Calu3 (cell line): ENCODE measurements at regions of chr6 and their contacts with region 1.

Region 1: DNA sequence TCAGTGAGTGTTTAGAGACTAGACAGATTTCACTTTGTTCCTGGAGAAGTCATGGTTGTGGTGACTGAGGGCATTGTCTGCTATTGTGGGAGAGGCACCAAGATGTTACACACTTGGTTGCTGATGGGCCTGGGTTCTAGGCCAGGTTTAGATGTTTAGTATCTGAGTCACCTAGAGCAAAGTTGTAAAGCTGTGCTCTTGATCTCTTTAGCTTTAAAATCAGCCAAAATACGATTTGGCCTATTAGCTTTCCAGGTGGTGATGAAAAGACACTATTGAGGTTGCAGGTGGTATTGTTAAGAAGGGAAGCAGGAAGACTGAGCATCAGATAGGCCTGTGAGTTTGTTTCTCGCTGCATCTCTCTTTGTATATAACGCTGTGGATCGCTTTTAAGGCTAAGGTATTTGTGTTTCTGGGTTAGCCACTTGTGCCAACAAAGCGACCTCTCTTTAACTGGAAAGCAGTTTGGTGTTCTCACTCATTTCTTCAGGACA is 48.6 kb downstream of the FOXO3 start:
- DNase-seq: no peak
- H3K4me3 Mint-ChIP-seq: no peak overlapping the region
- H3K27ac Mint-ChIP-seq: no peak overlapping the region
- H3K4me1 Mint-ChIP-seq: peaks cover 41% of the 10 kb centered on the region
- H3K27me3 Mint-ChIP-seq: no peaks in the 10 kb centered on the region
- CTCF ChIP-seq: no peak

Region 2: GRCh38 chr6:108565893-108566292 is 43.4 kb before region 1 on chr6:
- CTCF ChIA-PET with region 1: no interaction called
- intact Hi-C with region 1: loop called (anchors 5 kb)
- DNase-seq: no peak
- H3K4me3 Mint-ChIP-seq: peak overlapping the region; percentile 94
- H3K27ac Mint-ChIP-seq: peak overlapping the region; percentile 70
- H3K4me1 Mint-ChIP-seq: peaks cover 37% of the 10 kb centered on the region
- H3K27me3 Mint-ChIP-seq: no peaks in the 10 kb centered on the region
- CTCF ChIP-seq: no peak

Region 3: DNA sequence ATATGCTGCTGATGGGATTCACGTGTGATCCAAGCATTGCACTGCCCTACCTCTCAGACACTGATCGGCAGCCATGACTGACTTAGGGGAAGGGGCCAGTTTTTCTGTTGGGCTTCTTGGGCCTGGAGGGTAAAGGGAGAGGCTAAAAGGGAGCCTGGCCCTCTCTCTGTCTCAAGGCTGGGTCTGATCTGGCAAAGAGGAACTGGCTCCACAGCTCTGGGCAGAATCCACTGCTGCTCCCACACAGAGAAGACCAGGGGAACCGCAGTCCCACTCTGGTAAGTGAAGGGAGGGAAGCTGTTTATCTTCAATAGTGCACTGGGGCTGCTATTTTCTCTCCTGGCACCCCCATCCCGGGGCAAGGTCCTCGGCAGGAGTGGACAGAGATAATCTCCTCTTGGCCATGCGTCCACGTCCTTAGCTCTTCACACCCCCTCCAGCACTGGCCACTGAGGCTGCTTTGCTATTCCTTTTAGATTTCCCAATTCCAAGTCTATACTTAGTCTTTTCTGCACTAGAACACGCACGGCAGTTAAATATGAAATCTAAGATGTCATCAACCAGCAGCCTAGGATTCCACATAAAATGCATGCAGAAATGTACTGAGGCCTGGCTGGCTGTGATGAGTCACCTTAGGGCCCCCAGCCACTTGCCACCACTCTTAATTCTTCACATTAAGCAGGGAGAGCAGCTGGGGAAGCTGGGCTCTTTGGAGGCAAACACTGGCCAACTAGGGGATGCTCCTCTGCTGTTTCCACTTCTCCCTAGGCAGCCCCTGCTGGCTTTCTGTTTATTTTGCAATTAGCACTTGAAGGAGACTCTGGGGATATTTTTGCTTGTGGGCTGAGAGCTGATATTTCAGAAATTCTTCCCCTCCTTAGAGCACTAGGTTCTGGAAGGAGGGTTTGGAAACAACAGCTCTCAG is 151.1 kb after region 1 on chr6:
- CTCF ChIA-PET with region 1: no interaction called
- intact Hi-C with region 1: no loop called
- DNase-seq: no peak
- H3K4me3 Mint-ChIP-seq: no peak overlapping the region
- H3K27ac Mint-ChIP-seq: no peak overlapping the region
- H3K4me1 Mint-ChIP-seq: peaks cover 7% of the 10 kb centered on the region
- H3K27me3 Mint-ChIP-seq: peaks cover 10% of the 10 kb centered on the region
- CTCF ChIP-seq: no peak